ENCODE measurements at regions of chr6 and their contacts with region 1.

Region 1: DNA sequence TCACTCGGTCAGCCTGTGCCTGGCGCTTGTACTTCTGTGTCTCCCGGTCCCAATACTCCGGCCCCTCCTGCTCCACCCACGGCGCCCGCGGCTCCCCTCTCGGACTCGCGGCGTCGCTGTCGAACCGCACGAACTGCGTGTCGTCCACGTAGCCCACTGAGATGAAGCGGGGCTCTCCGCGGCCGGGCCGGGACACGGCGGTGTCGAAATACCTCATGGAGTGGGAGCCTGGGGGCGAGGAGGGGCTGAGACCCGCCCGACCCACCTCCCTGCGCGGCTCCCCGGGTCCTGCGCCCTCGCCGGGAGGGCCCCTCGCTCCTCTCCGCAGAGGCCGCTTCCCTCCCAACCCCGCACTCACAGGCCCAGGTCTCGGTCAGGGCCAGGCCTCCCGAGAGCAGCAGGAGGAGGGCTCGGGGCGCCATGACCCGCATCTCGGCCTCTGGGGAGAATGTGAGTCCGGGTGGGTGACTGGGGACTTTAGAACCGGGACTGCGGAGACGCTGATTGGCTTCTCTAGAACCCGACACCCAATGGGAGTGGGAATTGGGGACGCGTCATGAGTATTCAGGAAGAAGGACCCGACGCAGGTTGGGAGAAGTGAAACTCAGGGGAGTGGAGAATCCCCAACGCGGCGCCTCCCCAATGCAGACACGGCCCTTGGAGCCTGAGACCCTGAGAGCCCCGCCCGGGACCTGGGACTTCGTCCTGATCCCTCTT is at the start of gene HLA-C:
- DNase-seq: peak; percentile 88
- H3K4me3 Mint-ChIP-seq: peak within 1 kb of the TSS; percentile 97
- H3K27ac Mint-ChIP-seq: peak within 1 kb of the TSS; percentile 94
- H3K4me1 Mint-ChIP-seq: peaks cover 53% of the 10 kb centered on the region
- H3K27me3 Mint-ChIP-seq: peaks cover 4% of the 10 kb centered on the region
- total RNA-seq, gene HLA-C: 944 and 984 TPM in 2 replicates

Region 2: GRCh38 chr6:30836431-30836866 is 435.4 kb before region 1 on chr6:
- intact Hi-C with region 1: no loop called
- DNase-seq: no peak
- H3K4me3 Mint-ChIP-seq: no peak overlapping the region
- H3K27ac Mint-ChIP-seq: no peak overlapping the region
- H3K4me1 Mint-ChIP-seq: peaks cover 32% of the 10 kb centered on the region
- H3K27me3 Mint-ChIP-seq: no peaks in the 10 kb centered on the region

Region 3: DNA sequence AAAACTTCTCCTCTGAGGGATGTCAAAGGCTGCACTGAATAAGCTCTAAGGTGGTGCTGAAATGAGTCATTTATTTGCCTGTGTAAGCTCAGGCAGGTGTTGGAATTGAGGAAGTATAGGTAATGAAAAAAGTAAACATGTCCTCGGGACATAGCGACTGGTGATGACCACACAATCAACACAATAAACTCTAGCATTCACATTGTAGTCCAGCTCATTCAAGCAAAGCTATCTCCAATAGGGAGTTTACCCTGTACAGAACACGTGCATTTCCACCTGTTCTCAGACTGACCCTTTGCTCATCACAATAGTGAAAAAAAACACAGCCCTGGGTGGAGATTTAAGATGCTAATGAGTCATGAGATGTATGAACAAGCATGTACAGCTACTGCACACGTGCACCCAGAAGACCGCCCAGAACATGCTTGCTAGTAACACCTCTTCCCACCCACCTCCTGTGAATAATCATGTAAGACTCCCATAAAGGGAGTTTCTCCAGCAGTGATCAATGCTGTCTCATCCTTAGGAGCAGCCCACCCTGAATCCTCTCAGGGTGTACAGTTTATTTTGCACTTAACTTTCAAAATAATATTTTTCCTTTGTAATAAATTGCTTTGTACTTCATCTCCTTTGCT is 68.3 kb before region 1 on chr6:
- intact Hi-C with region 1: loop called (anchors 1 kb)
- DNase-seq: peak; percentile 54
- H3K4me3 Mint-ChIP-seq: peak overlapping the region; percentile 90
- H3K27ac Mint-ChIP-seq: peak overlapping the region; percentile 95
- H3K4me1 Mint-ChIP-seq: peaks cover 54% of the 10 kb centered on the region
- H3K27me3 Mint-ChIP-seq: no peaks in the 10 kb centered on the region

Region 4: DNA sequence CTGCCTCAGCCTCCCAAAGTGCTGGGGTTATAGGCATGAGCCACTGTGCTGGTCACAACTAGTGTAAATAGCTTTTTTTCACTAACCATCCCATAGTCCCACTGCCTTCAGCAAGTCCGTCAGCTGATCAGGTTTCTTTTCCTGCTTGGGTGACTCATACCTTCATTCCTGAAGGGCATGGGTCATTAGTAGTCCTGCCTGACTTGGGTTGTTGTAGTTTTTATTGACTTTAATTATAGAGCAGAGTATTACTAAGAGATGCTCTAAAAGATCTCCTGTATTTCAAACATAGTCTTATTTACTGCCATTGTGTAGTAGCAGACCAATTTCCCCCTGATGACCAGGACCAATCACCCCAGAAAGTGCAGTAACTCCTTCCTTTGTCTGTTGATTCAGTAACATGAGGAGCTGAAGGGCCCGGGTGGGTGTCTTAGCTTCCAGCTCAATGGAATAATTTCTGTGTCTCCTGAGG is 25.7 kb before region 1 on chr6:
- intact Hi-C with region 1: no loop called
- DNase-seq: no peak
- H3K4me3 Mint-ChIP-seq: no peak overlapping the region
- H3K27ac Mint-ChIP-seq: no peak overlapping the region
- H3K4me1 Mint-ChIP-seq: peaks cover 5% of the 10 kb centered on the region
- H3K27me3 Mint-ChIP-seq: peaks cover 15% of the 10 kb centered on the region

Region 5: DNA sequence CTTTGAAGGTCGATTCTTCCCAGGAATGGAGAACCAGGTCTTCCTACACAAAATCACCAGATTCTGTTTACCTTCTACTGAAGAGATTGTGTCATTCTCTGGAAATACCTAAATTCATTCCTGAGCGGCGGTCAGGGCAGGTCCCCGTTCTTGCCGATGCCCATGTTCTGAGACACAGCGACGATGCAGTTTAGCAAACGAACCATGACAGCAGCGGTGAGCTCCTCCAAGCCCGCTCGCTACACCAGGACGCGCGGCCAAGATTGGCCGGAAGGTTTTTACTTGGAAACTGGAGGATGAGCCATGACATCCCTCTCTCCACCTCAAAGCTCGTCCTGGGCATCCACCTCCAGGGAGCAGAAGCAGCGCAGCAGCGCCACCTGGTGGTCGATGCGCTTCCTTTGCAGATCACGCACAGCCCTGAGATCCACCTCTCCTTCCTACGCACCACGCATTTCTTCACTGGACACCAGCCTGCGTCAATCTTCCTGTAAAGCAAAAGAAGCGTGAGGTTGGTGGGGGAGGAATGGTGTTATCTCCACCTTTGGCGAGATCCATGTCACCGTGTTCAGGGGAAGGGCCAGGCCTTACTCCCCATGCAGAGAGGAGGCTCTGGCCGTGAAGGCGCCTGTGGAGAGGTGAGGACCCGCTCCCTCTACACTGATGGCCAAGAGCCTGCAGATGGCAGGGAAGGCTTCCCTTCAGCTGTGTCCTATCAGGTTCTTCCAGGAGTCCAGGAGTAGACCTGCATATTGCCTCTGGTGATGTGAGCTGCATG is 95.1 kb after region 1 on chr6:
- intact Hi-C with region 1: loop called (anchors 1 kb)
- DNase-seq: peak; percentile 81
- H3K4me3 Mint-ChIP-seq: peak overlapping the region; percentile 56
- H3K27ac Mint-ChIP-seq: no peak overlapping the region
- H3K4me1 Mint-ChIP-seq: peaks cover 39% of the 10 kb centered on the region
- H3K27me3 Mint-ChIP-seq: peaks cover 64% of the 10 kb centered on the region

Measured in activated T-helper 1 cell treated with anti-CD3 and anti-CD28 coated beads, Interleukin-12 subunit alpha, Interleukin-12 subunit beta, Interleukin-2, Interleukin-4 antibody, amounts not matched to agents 30 ng/mL and 10 ng/mL and 1 ng/mL, durations not matched to agents 14 hours and 24 hours and 36 hours (primary cell).